GM13977 (cell line): ENCODE measurements at regions of chr4 and their contacts with region 1.

Region 1: GRCh38 chr4:122617597-122618593 is 3.0 kb downstream of the IL21 start:
- DNase-seq: no peak
- CTCF ChIP-seq: no peak

Region 2: DNA sequence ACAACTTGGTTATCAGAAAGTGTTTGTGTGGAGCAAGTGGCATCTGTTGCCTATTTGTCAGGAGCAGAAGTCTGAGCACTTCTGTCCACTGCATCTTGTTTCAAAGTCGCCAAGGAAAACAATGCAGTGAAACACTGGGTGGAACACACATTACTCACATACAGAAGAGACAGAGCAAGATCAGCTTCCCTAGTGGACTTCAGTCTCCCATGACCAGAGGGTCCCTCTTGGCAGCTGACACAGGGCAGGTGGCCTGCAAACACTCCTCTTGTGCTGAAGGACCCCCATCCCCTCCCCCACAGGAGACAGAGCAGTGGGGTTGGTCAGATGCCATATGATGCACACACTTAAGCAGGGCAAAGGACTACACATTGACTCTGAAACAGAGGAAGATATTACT is 111.0 kb after region 1 on chr4:
- in situ Hi-C with region 1: loop called (anchors 10 kb)
- DNase-seq: no peak
- CTCF ChIP-seq: no peak

Region 3: DNA sequence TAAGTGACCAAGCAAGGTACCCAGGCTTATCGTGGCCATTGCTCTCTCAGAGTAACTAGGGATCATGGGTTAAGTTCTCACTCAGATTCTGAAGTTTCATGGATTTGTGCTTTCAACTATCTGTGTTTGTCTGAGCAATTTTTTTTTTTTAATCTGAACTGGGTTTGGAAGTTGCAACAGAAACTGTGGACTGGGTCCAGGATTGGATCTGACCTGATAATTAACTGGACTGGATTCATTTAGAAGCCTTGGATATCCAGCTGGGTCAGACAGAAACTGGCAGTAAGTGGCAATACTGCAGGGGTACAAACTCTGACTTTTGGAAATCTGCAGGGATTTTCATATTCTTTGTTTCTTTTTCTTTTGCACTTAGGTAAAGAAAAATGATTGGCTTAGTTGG is 170.0 kb after region 1 on chr4:
- in situ Hi-C with region 1: no loop called
- DNase-seq: no peak
- CTCF ChIP-seq: no peak